ENCODE measurements at regions of chr2 and their contacts with region 1.

Region 1: GRCh38 chr2:104944495-104944894 is 90.6 kb downstream of the POU3F3 start:
- DNase-seq: peak; percentile 35
- ATAC-seq: peak; percentile 72
- H3K4me3 ChIP-seq: no peak overlapping the region
- H3K27ac ChIP-seq: no peak overlapping the region
- H3K4me1 ChIP-seq: no peaks in the 10 kb centered on the region
- H3K27me3 ChIP-seq: 0 out of 2 replicates have a peak, but pooled peaks cover 4% of the 10 kb centered on the region
- CTCF ChIP-seq: peak; percentile 55 to 76 (median 64); a peak in 5 of 6 replicates
- POLR2A ChIP-seq: no peak
- RAD21 ChIP-seq: peak; percentile 83

Region 2: GRCh38 chr2:102975996-102976975 is 1968.2 kb before region 1 on chr2:
- CTCF ChIA-PET with region 1: no interaction called
- POLR2A ChIA-PET with region 1: no interaction called
- RAD21 ChIA-PET with region 1: interaction called in 1 of 2 experiments, 3 read pairs
- intact Hi-C with region 1: loop called (anchors 5 kb)
- DNase-seq: peak; percentile 16
- ATAC-seq: peak; percentile 84
- H3K4me3 ChIP-seq: no peak overlapping the region
- H3K27ac ChIP-seq: no peak overlapping the region
- H3K4me1 ChIP-seq: no peaks in the 10 kb centered on the region
- H3K27me3 ChIP-seq: 0 out of 2 replicates have a peak, but pooled peaks cover 4% of the 10 kb centered on the region
- CTCF ChIP-seq: peak; percentile 19 to 69 (median 62); a peak in 5 of 6 replicates
- POLR2A ChIP-seq: no peak
- RAD21 ChIP-seq: peak; percentile 63

Region 3: GRCh38 chr2:103161456-103162289 is 1782.8 kb before region 1 on chr2:
- CTCF ChIA-PET with region 1: interaction called, 15 read pairs
- POLR2A ChIA-PET with region 1: no interaction called
- RAD21 ChIA-PET with region 1: no interaction called
- intact Hi-C with region 1: loop called (anchors 1 kb)
- DNase-seq: peak; percentile 16
- ATAC-seq: no peak
- H3K4me3 ChIP-seq: no peak overlapping the region
- H3K27ac ChIP-seq: no peak overlapping the region
- H3K4me1 ChIP-seq: no peaks in the 10 kb centered on the region
- H3K27me3 ChIP-seq: no peaks in the 10 kb centered on the region
- CTCF ChIP-seq: peak; percentile 24 to 66 (median 65); a peak in 5 of 6 replicates
- POLR2A ChIP-seq: no peak
- RAD21 ChIP-seq: peak; percentile 56

Region 4: GRCh38 chr2:104539649-104540048 is 404.8 kb before region 1 on chr2:
- CTCF ChIA-PET with region 1: no interaction called
- POLR2A ChIA-PET with region 1: no interaction called
- RAD21 ChIA-PET with region 1: no interaction called
- intact Hi-C with region 1: loop called (anchors 10 kb)
- DNase-seq: no peak
- ATAC-seq: no peak
- H3K4me3 ChIP-seq: no peak overlapping the region
- H3K27ac ChIP-seq: no peak overlapping the region
- H3K4me1 ChIP-seq: no peaks in the 10 kb centered on the region
- H3K27me3 ChIP-seq: no peaks in the 10 kb centered on the region
- CTCF ChIP-seq: no peak
- POLR2A ChIP-seq: no peak
- RAD21 ChIP-seq: no peak

Region 5: GRCh38 chr2:105052773-105053172 is 108.3 kb after region 1 on chr2:
- CTCF ChIA-PET with region 1: no interaction called
- POLR2A ChIA-PET with region 1: no interaction called
- RAD21 ChIA-PET with region 1: no interaction called
- intact Hi-C with region 1: no loop called
- DNase-seq: no peak
- ATAC-seq: no peak
- H3K4me3 ChIP-seq: no peak overlapping the region
- H3K27ac ChIP-seq: no peak overlapping the region
- H3K4me1 ChIP-seq: peaks cover 0 to 7% of the 10 kb centered on the region in 2 experiments; a peak in 1 of 4 replicates
- H3K27me3 ChIP-seq: no peaks in the 10 kb centered on the region
- CTCF ChIP-seq: no peak
- POLR2A ChIP-seq: no peak
- RAD21 ChIP-seq: no peak

Region 6: GRCh38 chr2:105278654-105279053 is 334.2 kb after region 1 on chr2:
- CTCF ChIA-PET with region 1: no interaction called
- POLR2A ChIA-PET with region 1: no interaction called
- RAD21 ChIA-PET with region 1: no interaction called
- intact Hi-C with region 1: no loop called
- DNase-seq: no peak
- ATAC-seq: peak; percentile 49; the same call in 1 of the 2 replicates
- H3K4me3 ChIP-seq: no peak overlapping the region
- H3K27ac ChIP-seq: no peak overlapping the region
- H3K4me1 ChIP-seq: no peaks in the 10 kb centered on the region
- H3K27me3 ChIP-seq: no peaks in the 10 kb centered on the region
- CTCF ChIP-seq: peak in 1 of 3 experiments; percentile 23; a peak in 1 of 6 replicates
- POLR2A ChIP-seq: no peak
- RAD21 ChIP-seq: no peak

Region 7: GRCh38 chr2:105373895-105374401 is 429.5 kb after region 1 on chr2:
- CTCF ChIA-PET with region 1: no interaction called
- POLR2A ChIA-PET with region 1: no interaction called
- RAD21 ChIA-PET with region 1: no interaction called
- intact Hi-C with region 1: no loop called
- DNase-seq: no peak
- ATAC-seq: no peak
- H3K4me3 ChIP-seq: no peak overlapping the region
- H3K27ac ChIP-seq: no peak overlapping the region
- H3K4me1 ChIP-seq: no peaks in the 10 kb centered on the region
- H3K27me3 ChIP-seq: no peaks in the 10 kb centered on the region
- CTCF ChIP-seq: no peak
- POLR2A ChIP-seq: no peak
- RAD21 ChIP-seq: no peak

Region 8: GRCh38 chr2:105604938-105605337 is 660.4 kb after region 1 on chr2:
- CTCF ChIA-PET with region 1: no interaction called
- POLR2A ChIA-PET with region 1: no interaction called
- RAD21 ChIA-PET with region 1: no interaction called
- intact Hi-C with region 1: no loop called
- DNase-seq: no peak
- ATAC-seq: no peak
- H3K4me3 ChIP-seq: no peak overlapping the region
- H3K27ac ChIP-seq: no peak overlapping the region
- H3K4me1 ChIP-seq: no peaks in the 10 kb centered on the region
- H3K27me3 ChIP-seq: 0 out of 2 replicates have a peak, but pooled peaks cover 6% of the 10 kb centered on the region
- CTCF ChIP-seq: no peak
- POLR2A ChIP-seq: no peak
- RAD21 ChIP-seq: no peak